Activated CD4-positive, alpha-beta memory T cell treated with anti-CD3 and anti-CD28 coated beads for 36 hours (primary cell): ENCODE measurements at regions of chr7 and their contacts with region 1.

Region 1: GRCh38 chr7:111083413-111083812 is 7.5 kb upstream of the LRRN3 start:
- DNase-seq: peak; percentile 60
- H3K4me3 Mint-ChIP-seq: peak overlapping the region; percentile 13
- H3K27ac Mint-ChIP-seq: peak overlapping the region; percentile 90
- H3K4me1 Mint-ChIP-seq: peaks cover 70% of the 10 kb centered on the region
- H3K27me3 Mint-ChIP-seq: no peaks in the 10 kb centered on the region

Region 2: GRCh38 chr7:110918949-110919548 is 164.4 kb before region 1 on chr7:
- CTCF ChIA-PET with region 1: no interaction called
- POLR2A ChIA-PET with region 1: no interaction called
- intact Hi-C with region 1: loop called (anchors 5 kb)
- DNase-seq: no peak
- H3K4me3 Mint-ChIP-seq: no peak overlapping the region
- H3K27ac Mint-ChIP-seq: no peak overlapping the region
- H3K4me1 Mint-ChIP-seq: peaks cover 15% of the 10 kb centered on the region
- H3K27me3 Mint-ChIP-seq: peaks cover 4% of the 10 kb centered on the region

Region 3: DNA sequence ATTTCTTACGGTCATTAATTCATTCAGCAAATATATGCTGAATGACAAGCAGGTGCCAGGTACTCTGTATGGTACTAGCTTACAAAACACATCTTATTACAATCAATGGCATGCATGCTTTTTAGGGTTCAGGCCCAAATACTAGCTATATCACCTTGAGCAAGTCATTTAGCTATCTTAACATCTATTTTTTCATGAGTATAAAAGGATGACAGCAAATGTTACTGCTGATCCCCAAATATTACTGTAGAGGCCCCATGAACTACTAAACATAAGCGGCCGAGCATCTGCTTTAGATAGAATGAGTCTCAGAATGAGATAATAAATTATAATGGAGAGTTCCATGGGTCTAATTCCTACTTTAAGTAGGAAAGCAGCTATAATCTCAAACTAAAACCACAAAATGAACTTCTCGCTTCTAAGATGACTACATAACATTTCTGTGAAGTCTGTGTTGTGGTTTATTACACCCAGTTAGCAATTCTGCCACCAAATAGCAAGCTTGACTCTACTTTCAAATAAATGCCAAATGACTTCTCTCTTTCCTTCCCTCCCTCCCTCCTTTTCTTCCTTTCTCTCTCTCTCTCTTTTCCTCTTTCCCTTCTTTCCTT is 106.2 kb before region 1 on chr7:
- CTCF ChIA-PET with region 1: no interaction called
- POLR2A ChIA-PET with region 1: no interaction called
- intact Hi-C with region 1: loop called (anchors 1 kb)
- DNase-seq: no peak
- H3K4me3 Mint-ChIP-seq: peak overlapping the region; percentile 28
- H3K27ac Mint-ChIP-seq: peak overlapping the region; percentile 59
- H3K4me1 Mint-ChIP-seq: peaks cover 24% of the 10 kb centered on the region
- H3K27me3 Mint-ChIP-seq: no peaks in the 10 kb centered on the region

Region 4: GRCh38 chr7:111012799-111013675 is 70.4 kb before region 1 on chr7:
- CTCF ChIA-PET with region 1: interaction called, 3 read pairs
- POLR2A ChIA-PET with region 1: interaction called, 8 read pairs
- intact Hi-C with region 1: loop called (anchors 1 kb)
- DNase-seq: peak; percentile 59
- H3K4me3 Mint-ChIP-seq: peak overlapping the region; percentile 59
- H3K27ac Mint-ChIP-seq: peak overlapping the region; percentile 84
- H3K4me1 Mint-ChIP-seq: peaks cover 60% of the 10 kb centered on the region
- H3K27me3 Mint-ChIP-seq: no peaks in the 10 kb centered on the region

Region 5: DNA sequence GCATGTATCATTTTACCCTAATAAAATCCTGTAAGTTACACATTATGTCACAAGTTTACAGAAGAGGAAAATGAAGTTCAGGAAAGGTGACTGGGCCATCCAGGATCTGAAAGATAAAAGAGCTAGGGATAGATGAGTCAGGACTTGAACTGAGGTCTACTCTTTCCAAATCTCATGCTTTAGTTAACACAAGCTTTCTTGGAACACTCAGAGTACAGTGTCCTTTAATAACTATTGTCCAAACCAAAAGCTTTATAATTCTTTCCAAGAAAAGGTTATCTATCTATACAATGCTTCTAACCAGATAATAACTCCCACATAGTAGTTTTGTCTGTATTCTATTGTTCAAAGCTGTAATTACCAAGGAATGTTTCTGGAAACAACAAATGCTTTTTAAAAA is 172.2 kb after region 1 on chr7:
- CTCF ChIA-PET with region 1: no interaction called
- POLR2A ChIA-PET with region 1: no interaction called
- intact Hi-C with region 1: no loop called
- DNase-seq: no peak
- H3K4me3 Mint-ChIP-seq: no peak overlapping the region
- H3K27ac Mint-ChIP-seq: no peak overlapping the region
- H3K4me1 Mint-ChIP-seq: no peaks in the 10 kb centered on the region
- H3K27me3 Mint-ChIP-seq: no peaks in the 10 kb centered on the region